MCF 10A (cell line): ENCODE measurements at regions of chr10 and their contacts with region 1.

Region 1: GRCh38 chr10:19922236-19922963 is 106.2 kb downstream of the PLXDC2 start:
- DNase-seq: peak; percentile 85
- H3K4me3 Mint-ChIP-seq: peak overlapping the region; percentile 56
- H3K27ac Mint-ChIP-seq: peak overlapping the region; percentile 83
- H3K4me1 Mint-ChIP-seq: peaks cover 60% of the 10 kb centered on the region
- H3K27me3 Mint-ChIP-seq: no peaks in the 10 kb centered on the region
- CTCF ChIP-seq: no peak

Region 2: DNA sequence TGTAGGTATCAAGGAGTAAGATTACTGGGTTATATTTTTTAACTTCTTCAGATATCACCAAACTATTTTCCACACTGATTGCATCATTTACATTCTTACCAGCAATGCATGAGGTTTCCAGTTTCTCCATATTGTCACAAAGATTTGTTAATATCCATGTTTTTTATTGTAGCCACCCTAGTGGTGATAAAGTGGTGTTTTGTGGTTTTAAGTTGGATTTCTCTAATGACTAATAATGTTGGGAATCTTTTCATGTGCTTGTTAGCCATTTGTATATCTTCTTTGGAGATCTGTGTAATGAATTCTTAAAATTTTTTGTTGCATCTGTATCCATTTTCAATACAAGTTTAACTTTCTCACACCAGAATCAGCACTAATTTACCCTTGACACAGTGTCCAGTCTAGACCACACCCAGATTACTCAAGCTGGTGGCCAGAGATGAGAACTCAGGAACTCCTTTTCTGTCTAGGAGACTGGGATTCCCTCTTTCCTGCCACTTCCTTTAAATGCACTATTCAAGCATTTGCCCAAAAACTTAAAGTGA is 173.1 kb before region 1 on chr10:
- CTCF ChIA-PET with region 1: no interaction called
- POLR2A ChIA-PET with region 1: no interaction called
- intact Hi-C with region 1: no loop called
- DNase-seq: peak; percentile 25
- H3K4me3 Mint-ChIP-seq: no peak overlapping the region
- H3K27ac Mint-ChIP-seq: peak overlapping the region; percentile 44
- H3K4me1 Mint-ChIP-seq: peaks cover 8% of the 10 kb centered on the region
- H3K27me3 Mint-ChIP-seq: no peaks in the 10 kb centered on the region
- CTCF ChIP-seq: no peak

Region 3: DNA sequence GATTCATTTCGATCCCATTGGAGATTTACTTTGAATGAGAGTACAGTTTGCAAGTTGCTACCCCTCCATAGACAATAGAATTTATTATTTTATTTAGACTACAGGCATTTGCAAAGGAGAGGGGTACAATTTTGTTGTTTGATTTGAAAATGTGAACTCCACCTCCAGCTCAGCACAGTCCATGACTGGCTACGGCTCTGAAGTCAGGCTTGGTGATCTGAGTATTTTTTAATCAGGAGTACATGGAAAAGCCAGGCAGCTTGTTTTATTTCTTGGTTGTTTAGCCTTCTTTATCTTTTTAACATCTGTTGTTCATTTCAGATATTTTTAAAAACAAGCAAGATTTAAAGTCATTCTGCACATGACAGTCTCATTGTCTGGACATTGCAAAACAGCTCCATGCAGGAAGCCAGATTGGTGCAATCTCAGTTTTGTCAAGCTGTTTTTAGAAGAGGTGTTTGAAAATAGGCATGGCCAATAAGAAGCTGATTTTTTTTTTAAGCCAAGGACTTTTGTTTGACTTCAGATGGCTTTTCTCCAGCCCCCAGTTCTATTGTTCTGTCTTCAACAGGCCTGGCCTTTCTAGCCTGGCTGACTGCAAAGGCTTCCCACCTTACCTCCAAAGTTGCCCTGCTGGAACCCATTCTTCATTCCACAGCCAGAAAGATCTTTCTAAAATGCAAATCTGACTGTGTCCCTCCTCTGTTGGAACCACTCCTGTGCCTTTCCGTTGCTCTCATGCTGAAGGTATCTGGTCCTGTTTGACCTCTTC is 93.9 kb before region 1 on chr10:
- CTCF ChIA-PET with region 1: no interaction called
- POLR2A ChIA-PET with region 1: interaction called, 32 read pairs
- intact Hi-C with region 1: no loop called
- DNase-seq: peak; percentile 42
- H3K4me3 Mint-ChIP-seq: no peak overlapping the region
- H3K27ac Mint-ChIP-seq: peak overlapping the region; percentile 78
- H3K4me1 Mint-ChIP-seq: peaks cover 27% of the 10 kb centered on the region
- H3K27me3 Mint-ChIP-seq: no peaks in the 10 kb centered on the region
- CTCF ChIP-seq: no peak

Region 4: GRCh38 chr10:19847321-19847720 is 75.1 kb before region 1 on chr10:
- CTCF ChIA-PET with region 1: no interaction called
- POLR2A ChIA-PET with region 1: interaction called, 10 read pairs
- intact Hi-C with region 1: no loop called
- DNase-seq: peak; percentile 84
- H3K4me3 Mint-ChIP-seq: peak overlapping the region; percentile 53
- H3K27ac Mint-ChIP-seq: peak overlapping the region; percentile 65
- H3K4me1 Mint-ChIP-seq: peaks cover 34% of the 10 kb centered on the region
- H3K27me3 Mint-ChIP-seq: no peaks in the 10 kb centered on the region
- CTCF ChIP-seq: no peak

Region 5: GRCh38 chr10:20004087-20004523 is 81.7 kb after region 1 on chr10:
- CTCF ChIA-PET with region 1: no interaction called
- POLR2A ChIA-PET with region 1: interaction called, 12 read pairs
- intact Hi-C with region 1: loop called (anchors 10 kb)
- DNase-seq: peak; percentile 52
- H3K4me3 Mint-ChIP-seq: peak overlapping the region; percentile 54
- H3K27ac Mint-ChIP-seq: peak overlapping the region; percentile 91
- H3K4me1 Mint-ChIP-seq: peaks cover 27% of the 10 kb centered on the region
- H3K27me3 Mint-ChIP-seq: no peaks in the 10 kb centered on the region
- CTCF ChIP-seq: no peak